Caco-2 (cell line): ENCODE measurements at regions of chr12 and their contacts with region 1.

Region 1: GRCh38 chr12:47302111-47302671 is 222.4 kb upstream of the AMIGO2 start:
- DNase-seq: peak; percentile 59 to 67
- H3K4me3 ChIP-seq: no peak overlapping the region
- H3K4me3 Mint-ChIP-seq: peak overlapping the region; percentile 37
- H3K27ac Mint-ChIP-seq: peak overlapping the region; percentile 88
- H3K4me1 ChIP-seq: peaks cover 37% of the 10 kb centered on the region
- H3K4me1 Mint-ChIP-seq: peaks cover 42% of the 10 kb centered on the region
- H3K27me3 ChIP-seq: no peaks in the 10 kb centered on the region
- H3K27me3 Mint-ChIP-seq: no peaks in the 10 kb centered on the region
- CTCF ChIP-seq: no peak

Region 2: GRCh38 chr12:47276621-47277309 is 25.4 kb before region 1 on chr12:
- CTCF ChIA-PET with region 1: no interaction called
- POLR2A ChIA-PET with region 1: no interaction called
- intact Hi-C with region 1: loop called (anchors 1 kb)
- DNase-seq: peak; percentile 48 to 49
- H3K4me3 ChIP-seq: no peak overlapping the region
- H3K4me3 Mint-ChIP-seq: no peak overlapping the region
- H3K27ac Mint-ChIP-seq: peak overlapping the region; percentile 6
- H3K4me1 ChIP-seq: peaks cover 26% of the 10 kb centered on the region
- H3K4me1 Mint-ChIP-seq: peaks cover 17% of the 10 kb centered on the region
- H3K27me3 ChIP-seq: no peaks in the 10 kb centered on the region
- H3K27me3 Mint-ChIP-seq: no peaks in the 10 kb centered on the region
- CTCF ChIP-seq: no peak